Naive thymus-derived CD8-positive, alpha-beta T cell (primary cell): ENCODE measurements at regions of chr10 and their contacts with region 1.

Region 1: DNA sequence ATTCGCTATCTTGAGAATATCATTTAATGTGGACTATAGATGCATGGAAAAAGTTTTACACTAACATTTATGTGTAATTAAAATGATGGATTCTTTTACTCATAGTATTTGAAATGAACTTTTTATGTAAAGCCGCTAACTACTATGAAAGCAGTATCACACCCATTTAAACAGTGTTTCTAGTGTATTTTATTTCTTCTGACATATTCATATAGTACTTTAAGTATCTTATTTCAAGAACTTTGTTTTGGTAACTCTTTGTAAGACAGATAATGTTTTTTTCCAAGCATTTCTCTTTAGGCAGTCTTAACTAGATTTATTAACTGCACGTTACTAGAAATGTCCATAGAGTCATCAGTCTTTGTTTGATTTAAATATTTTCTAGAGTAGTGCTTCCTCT is 12.5 kb upstream of the ARMC3 start:
- DNase-seq: no peak
- ATAC-seq: no peak
- H3K4me3 Mint-ChIP-seq: no peak overlapping the region
- H3K27ac Mint-ChIP-seq: no peak overlapping the region
- H3K4me1 Mint-ChIP-seq: peaks cover 0 to 10% (median 3%) of the 10 kb centered on the region in 4 donors
- H3K27me3 Mint-ChIP-seq: peaks cover 0 to 5% (median 0%) of the 10 kb centered on the region in 5 donors

Region 2: GRCh38 chr10:21696302-21696701 is 1219.0 kb before region 1 on chr10:
- POLR2A ChIA-PET with region 1: interaction called, 10 read pairs
- DNase-seq: no peak
- ATAC-seq: no peak
- H3K4me3 Mint-ChIP-seq: no peak overlapping the region
- H3K27ac Mint-ChIP-seq: peak overlapping the region in 1 of 10 donors; percentile 16
- H3K4me1 Mint-ChIP-seq: peaks cover 6 to 22% (median 14%) of the 10 kb centered on the region in 4 donors
- H3K27me3 Mint-ChIP-seq: no peaks in the 10 kb centered on the region

Region 3: GRCh38 chr10:22891797-22892196 is 23.5 kb before region 1 on chr10:
- POLR2A ChIA-PET with region 1: no interaction called
- DNase-seq: no peak
- ATAC-seq: no peak
- H3K4me3 Mint-ChIP-seq: no peak overlapping the region
- H3K27ac Mint-ChIP-seq: peak overlapping the region in 1 of 10 donors; percentile 9
- H3K4me1 Mint-ChIP-seq: no peaks in the 10 kb centered on the region
- H3K27me3 Mint-ChIP-seq: no peaks in the 10 kb centered on the region